ENCODE measurements at regions of chr5 and their contacts with region 1.

Region 1: GRCh38 chr5:177311723-177312648 is at the start of gene MXD3:
- DNase-seq: peak; percentile 100
- ATAC-seq: peak; percentile 87
- H3K4me3 Mint-ChIP-seq: peak within 1 kb of the TSS; percentile 89
- H3K27ac Mint-ChIP-seq: peak within 1 kb of the TSS; percentile 91
- H3K4me1 Mint-ChIP-seq: peaks cover 26% of the 10 kb centered on the region
- H3K27me3 Mint-ChIP-seq: no peaks in the 10 kb centered on the region
- CTCF ChIP-seq: no peak
- total RNA-seq, gene MXD3: 19.3 to 25.1 TPM

Region 2: DNA sequence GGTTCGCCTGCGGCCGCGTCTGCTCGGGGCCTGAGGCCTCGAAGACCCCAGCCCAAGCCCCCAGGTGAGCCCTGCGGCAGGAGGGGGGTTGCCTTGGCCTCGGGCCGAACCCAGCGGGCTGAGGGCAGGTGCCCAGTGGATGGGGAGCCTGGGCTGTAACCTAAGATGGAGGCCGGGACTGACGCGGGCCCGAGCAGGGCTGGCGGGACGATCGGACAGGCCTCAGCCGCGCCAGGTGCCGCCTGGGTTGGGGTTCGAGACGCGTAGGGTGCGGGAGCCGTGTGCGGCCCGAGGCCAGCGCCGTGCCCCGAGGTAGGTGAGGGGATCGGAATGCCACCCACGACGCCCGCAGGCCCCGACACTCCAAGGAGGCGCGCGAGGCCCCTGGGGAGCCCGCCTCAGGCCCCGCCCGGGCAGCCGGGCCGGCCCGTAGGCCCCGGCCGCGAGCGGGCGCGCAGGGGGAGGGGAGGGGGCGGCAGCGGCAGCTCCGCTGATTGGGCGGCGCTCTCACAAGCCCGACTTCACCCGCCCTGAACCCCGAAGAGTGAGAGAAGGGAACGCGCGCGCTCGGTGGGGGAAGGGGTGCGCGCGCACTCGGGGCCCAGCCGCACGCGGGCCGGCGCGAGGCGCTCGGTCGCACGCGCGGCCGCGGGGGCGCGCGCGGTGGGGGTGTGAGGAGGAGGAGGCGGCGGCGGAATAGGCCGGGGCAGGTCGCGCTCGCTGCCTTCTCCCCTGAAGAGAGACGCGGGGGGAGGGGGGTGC is 178.7 kb before region 1 on chr5 and contains the start of gene NSD1:
- CTCF ChIA-PET with region 1: interaction called, 12 read pairs
- POLR2A ChIA-PET with region 1: interaction called, 4 read pairs
- intact Hi-C with region 1: no loop called
- DNase-seq: peak; percentile 90
- ATAC-seq: peak; percentile 83
- H3K4me3 Mint-ChIP-seq: peak within 1 kb of the TSS; percentile 89
- H3K27ac Mint-ChIP-seq: peak within 1 kb of the TSS; percentile 87
- H3K4me1 Mint-ChIP-seq: peaks cover 46% of the 10 kb centered on the region
- H3K27me3 Mint-ChIP-seq: no peaks in the 10 kb centered on the region
- CTCF ChIP-seq: no peak
- total RNA-seq, gene NSD1: 60.1 to 64.8 TPM

Region 3: GRCh38 chr5:177220576-177220975 is 91.4 kb before region 1 on chr5:
- CTCF ChIA-PET with region 1: no interaction called
- POLR2A ChIA-PET with region 1: no interaction called
- intact Hi-C with region 1: no loop called
- DNase-seq: no peak
- ATAC-seq: no peak
- H3K4me3 Mint-ChIP-seq: no peak overlapping the region
- H3K27ac Mint-ChIP-seq: no peak overlapping the region
- H3K4me1 Mint-ChIP-seq: peaks cover 29% of the 10 kb centered on the region
- H3K27me3 Mint-ChIP-seq: no peaks in the 10 kb centered on the region
- CTCF ChIP-seq: no peak

Region 4: GRCh38 chr5:177294632-177295260 is 17.2 kb before region 1 on chr5:
- CTCF ChIA-PET with region 1: interaction called, 36 read pairs
- POLR2A ChIA-PET with region 1: no interaction called
- intact Hi-C with region 1: no loop called
- DNase-seq: no peak
- ATAC-seq: no peak
- H3K4me3 Mint-ChIP-seq: no peak overlapping the region
- H3K27ac Mint-ChIP-seq: no peak overlapping the region
- H3K4me1 Mint-ChIP-seq: peaks cover 34% of the 10 kb centered on the region
- H3K27me3 Mint-ChIP-seq: no peaks in the 10 kb centered on the region
- CTCF ChIP-seq: no peak

Region 5: GRCh38 chr5:177351385-177352329 is 39.7 kb after region 1 on chr5 and contains the start of gene LMAN2:
- CTCF ChIA-PET with region 1: interaction called, 28 read pairs
- POLR2A ChIA-PET with region 1: interaction called, 15 read pairs
- intact Hi-C with region 1: loop called (anchors 5 kb)
- DNase-seq: peak; percentile 96
- ATAC-seq: peak; percentile 98
- H3K4me3 Mint-ChIP-seq: peak within 1 kb of the TSS; percentile 93
- H3K27ac Mint-ChIP-seq: peak within 1 kb of the TSS; percentile 100
- H3K4me1 Mint-ChIP-seq: peaks cover 54% of the 10 kb centered on the region
- H3K27me3 Mint-ChIP-seq: no peaks in the 10 kb centered on the region
- CTCF ChIP-seq: no peak
- total RNA-seq, gene LMAN2: 79.9 to 87.5 TPM

Region 6: GRCh38 chr5:177382423-177383029 is 70.5 kb after region 1 on chr5:
- CTCF ChIA-PET with region 1: interaction called, 10 read pairs
- POLR2A ChIA-PET with region 1: interaction called, 4 read pairs
- intact Hi-C with region 1: no loop called
- DNase-seq: peak; percentile 39
- ATAC-seq: no peak
- H3K4me3 Mint-ChIP-seq: no peak overlapping the region
- H3K27ac Mint-ChIP-seq: no peak overlapping the region
- H3K4me1 Mint-ChIP-seq: peaks cover 23% of the 10 kb centered on the region
- H3K27me3 Mint-ChIP-seq: no peaks in the 10 kb centered on the region
- CTCF ChIP-seq: peak; percentile 13

Region 7: DNA sequence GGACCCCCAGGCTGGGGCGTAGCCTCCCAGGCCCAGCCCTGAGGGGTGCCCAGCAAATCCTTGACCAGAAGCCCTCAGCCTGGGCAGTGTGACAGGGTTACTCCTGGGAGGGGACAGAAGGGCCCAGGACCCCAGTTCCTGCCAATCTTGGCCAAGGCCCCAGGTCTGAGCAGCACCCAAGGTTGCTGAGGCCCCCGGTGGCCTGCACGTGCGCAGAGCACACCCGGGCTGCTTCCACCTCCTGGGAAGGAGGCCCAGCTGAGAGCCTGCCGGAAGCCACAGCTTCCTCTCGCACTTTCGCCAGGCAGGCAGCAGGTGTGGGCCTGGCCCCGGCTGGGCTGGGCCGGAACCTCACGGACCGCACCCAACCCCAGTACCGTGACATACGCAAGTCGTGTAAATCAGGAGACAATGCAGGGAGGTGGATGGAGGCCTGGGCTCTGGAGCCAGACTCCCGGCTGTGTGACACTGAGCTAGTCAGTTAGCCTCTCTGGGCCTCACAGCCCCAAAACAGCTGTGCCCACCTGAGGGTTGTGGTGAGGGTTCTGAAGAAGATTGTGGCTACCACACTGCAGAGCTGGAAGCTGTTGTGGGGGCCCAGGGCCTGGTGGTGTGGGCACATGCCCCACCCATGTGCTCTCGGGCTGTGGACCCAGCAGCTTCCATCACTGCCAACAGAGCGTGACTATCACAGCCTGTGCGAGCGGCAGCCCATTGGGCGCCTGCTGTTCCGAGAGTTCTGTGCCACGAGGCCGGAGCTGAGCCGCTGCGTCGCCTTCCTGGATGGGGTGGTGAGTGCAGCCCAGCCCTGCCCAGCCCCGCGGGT is 119.5 kb after region 1 on chr5:
- CTCF ChIA-PET with region 1: interaction called, 16 read pairs
- POLR2A ChIA-PET with region 1: interaction called, 11 read pairs
- intact Hi-C with region 1: no loop called
- DNase-seq: peak; percentile 92
- ATAC-seq: peak; percentile 37
- H3K4me3 Mint-ChIP-seq: peak overlapping the region; percentile 97
- H3K27ac Mint-ChIP-seq: peak overlapping the region; percentile 98
- H3K4me1 Mint-ChIP-seq: peaks cover 57% of the 10 kb centered on the region
- H3K27me3 Mint-ChIP-seq: no peaks in the 10 kb centered on the region
- CTCF ChIP-seq: no peak

Region 8: DNA sequence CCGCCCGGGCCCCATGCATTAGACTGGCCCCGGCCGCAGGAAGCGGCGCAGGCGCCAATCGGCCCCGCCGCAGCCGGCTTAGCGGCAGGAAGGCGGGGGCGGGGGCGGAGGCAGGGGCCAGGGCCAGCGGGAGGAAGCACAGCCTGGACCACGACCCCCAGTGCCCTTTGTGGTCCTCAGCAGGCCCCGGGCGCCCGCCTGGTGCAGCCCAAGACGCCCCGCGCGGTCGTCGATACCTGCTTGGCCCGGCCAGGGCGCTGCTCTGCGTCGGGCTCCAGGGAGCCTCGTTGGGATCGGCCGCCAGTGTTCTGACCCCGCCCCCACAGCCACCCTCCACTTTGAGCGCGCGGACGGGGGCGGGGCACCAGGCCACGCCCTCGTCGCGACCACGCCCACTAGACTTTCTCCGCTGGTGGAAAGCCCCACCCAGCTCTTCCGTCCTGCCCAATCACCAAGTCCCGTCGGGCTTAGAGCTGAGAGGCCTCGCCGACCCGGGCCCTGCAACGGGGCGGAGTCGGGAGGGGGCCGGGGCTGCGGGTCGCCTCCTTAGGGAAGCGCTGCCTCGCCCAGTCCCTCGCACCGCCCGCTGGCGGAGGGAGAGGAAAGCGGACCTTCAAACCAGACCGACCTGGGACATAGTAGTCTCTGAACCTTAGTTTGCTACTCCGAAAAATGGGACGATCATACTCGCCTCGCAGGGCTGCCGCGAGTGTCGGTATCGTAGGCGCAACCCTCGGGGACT is 185.5 kb after region 1 on chr5 and contains the start of gene PDLIM7:
- CTCF ChIA-PET with region 1: interaction called, 14 read pairs
- POLR2A ChIA-PET with region 1: interaction called, 3 read pairs
- intact Hi-C with region 1: loop called (anchors 5 kb)
- DNase-seq: peak; percentile 97
- ATAC-seq: peak; percentile 82
- H3K4me3 Mint-ChIP-seq: peak within 1 kb of the TSS; percentile 79
- H3K27ac Mint-ChIP-seq: peak within 1 kb of the TSS; percentile 68
- H3K4me1 Mint-ChIP-seq: peaks cover 38% of the 10 kb centered on the region
- H3K27me3 Mint-ChIP-seq: peaks cover 11% of the 10 kb centered on the region
- CTCF ChIP-seq: no peak
- total RNA-seq, gene PDLIM7: 68.4 to 73.0 TPM

Region 9: DNA sequence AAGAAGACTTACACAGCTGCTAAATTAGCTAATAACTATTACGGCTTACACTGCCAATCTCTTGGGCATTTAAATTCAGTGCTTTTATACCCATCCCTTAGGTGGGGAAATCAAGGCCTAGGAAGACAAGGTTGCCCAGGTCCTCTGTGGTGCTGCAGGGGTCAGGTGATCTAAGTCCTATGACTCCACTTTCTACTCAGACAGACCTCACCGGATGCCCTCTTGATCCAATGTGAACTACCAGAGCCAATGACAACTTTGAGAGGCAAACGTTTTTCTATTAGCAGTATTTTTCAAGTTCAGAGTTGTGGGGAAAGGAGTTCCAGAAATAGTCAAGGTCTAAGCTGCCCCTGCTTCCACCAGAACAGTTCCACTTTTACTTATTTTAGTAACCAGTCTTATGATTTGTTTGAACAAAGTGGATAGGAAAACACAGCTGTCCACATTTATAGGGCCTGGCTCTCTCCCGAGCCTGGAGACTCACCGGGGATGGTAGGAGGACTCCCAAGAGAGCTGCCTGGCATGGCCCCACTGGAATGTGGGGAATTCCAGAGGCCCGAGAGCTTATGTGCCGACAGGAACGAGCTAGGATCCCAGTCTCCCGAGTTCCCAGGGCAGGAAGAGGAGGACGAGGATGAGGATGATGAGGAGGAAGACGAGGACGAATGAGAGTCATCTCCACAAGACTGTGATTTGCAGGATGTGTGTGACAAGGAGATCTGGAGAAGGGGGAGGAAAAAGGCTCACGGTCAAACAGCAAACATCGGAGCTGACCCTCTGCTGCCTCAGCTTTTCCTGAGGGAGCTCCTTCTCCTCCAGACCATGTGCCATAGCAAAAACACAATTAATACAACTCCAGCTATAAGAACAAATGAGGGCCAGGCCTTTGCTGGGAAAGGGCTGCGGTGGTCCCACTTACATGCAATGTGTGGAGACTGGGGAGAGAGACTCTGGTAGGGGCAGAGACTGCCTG is 225.7 kb after region 1 on chr5:
- CTCF ChIA-PET with region 1: no interaction called
- POLR2A ChIA-PET with region 1: no interaction called
- intact Hi-C with region 1: no loop called
- DNase-seq: no peak
- ATAC-seq: no peak
- H3K4me3 Mint-ChIP-seq: no peak overlapping the region
- H3K27ac Mint-ChIP-seq: no peak overlapping the region
- H3K4me1 Mint-ChIP-seq: peaks cover 4% of the 10 kb centered on the region
- H3K27me3 Mint-ChIP-seq: no peaks in the 10 kb centered on the region
- CTCF ChIP-seq: no peak